ENCODE measurements at regions of chr18 and their contacts with region 1.

Region 1: DNA sequence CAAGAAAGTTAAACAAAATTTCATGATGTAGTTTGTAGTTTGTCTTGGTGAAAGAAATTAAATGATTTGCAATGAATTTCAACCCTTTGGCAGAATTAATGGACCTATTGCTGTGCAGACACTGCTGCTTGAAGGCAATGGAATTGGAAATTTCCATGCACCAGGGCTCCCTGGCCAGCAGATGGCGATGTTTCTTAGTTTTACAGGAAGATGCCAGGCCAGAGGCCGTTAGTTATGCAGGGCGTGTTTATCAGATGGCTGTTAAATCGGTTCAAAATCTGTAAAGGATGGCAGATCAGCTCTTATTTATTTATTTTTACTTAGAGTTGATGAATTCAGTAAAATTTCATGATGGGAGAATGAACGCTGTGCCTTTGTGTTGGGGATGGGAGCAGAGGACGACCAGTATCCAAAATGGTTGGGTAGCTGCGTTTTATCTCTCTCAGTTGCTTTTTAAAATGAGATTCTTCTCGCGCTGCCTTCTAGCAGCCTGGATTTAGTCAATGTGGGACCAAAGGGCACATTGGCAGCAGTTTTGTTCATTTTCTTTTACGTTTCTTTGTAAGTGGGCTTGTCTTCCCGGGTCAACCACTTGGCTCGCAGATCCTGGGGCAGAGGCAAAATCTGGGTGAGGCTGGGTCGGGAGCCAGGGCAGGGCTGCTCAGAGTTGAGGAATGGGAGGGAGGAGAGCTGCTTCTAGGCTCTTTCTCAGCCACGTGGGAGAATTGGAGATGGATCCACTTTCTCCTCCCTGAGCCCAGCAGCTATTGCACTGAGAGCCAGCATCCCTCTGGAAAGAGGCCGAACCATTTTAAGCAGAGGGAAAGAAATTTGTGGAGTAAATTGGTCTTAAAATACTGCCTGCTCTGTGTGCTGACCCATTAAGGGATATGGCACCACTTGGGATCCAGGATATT is 344.0 kb downstream of the PIK3C3 start:
- DNase-seq: peak; percentile 74
- ATAC-seq: peak; percentile 94

Region 2: DNA sequence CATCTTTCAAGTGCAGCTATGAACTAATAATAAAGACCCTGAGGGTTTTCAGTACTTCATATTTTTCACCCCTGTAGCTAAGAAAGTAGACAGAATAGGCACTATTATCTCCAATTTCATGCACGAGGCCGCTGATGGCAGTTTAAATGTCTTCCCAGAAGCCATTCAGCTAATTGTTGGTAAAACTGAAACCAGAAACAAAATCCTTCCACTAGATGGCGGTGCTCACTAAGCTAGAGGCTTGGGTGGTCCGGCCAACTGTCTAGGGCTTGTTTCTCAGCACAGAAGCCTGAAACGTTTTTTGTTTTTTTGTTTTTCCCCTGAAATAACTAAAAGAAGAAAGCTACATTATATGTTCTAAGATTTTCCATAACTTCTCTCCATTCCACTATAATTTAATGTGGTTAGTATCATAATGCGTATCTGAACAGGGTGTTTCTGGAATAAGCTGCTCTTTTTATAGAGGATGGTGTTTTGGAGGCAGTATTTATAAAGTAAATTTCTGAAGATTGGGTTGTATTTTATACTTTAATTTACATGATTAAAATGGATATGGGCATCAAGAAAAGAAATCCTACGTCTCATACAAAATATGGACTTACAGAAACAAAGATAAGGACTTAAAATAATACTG is 184.6 kb before region 1 on chr18:
- intact Hi-C with region 1: loop called (anchors 10 kb)
- DNase-seq: peak; percentile 46
- ATAC-seq: peak; percentile 85

Region 3: GRCh38 chr18:42373584-42373983 is 74.6 kb after region 1 on chr18:
- intact Hi-C with region 1: no loop called
- DNase-seq: no peak
- ATAC-seq: no peak

Measured in left ventricle myocardium superior (tissue), 1 donor.